Heart left ventricle (tissue), 16 donors: ENCODE measurements at regions of chr10 and their contacts with region 1.

Region 1: DNA sequence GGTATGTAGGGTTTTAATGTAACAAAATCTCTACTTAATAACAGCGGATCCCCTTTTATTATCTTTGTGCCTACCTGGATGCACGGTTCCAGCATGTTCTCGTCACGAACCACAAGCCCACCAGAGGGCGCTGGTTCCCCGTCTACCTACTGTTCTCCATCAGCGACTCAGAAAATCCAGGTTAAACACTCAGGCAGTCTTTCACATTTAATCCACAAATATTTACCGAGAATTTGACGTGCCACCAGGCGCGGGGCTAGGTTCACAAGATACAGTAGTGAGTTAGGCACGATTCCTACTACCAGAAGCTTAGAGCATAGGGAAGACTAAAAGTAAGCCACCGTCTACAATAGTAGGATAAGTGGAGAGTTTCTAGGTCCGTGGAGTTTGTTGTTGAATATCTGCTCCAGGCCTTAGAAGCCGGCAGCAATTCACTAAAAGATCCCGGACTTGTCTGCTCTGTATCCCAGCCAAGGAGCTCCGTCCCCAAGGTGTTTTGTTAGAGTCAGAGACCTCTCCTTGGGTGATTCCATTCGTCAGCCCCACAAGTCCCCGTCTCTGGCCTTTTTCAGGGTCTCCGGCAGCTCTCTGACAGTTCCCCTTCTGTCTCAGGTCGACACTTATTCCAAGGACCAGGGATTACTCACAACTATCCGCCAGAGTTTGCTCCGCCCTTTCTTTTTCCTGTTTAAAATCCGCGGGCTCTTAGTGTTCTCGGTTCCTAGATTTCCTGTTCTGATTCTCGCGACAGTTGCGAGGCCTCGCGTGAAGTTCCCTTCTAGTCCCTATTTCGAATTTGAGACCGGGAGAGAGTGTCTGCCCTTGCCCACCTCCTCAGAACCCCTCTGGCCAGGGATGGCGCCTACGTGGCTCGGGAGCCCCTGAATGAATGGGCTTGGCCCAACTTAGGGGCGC is 1.5 kb upstream of the KAZALD1 start:
- DNase-seq: peak; percentile 89 to 96 (median 93)
- ATAC-seq: peak; percentile 72 to 79 (median 76)
- H3K4me3 ChIP-seq: peak overlapping the region; percentile 59 to 88 (median 78)
- H3K27ac ChIP-seq: peak overlapping the region; percentile 92 to 100 (median 98)
- H3K4me1 ChIP-seq: peaks cover 0 to 50% (median 36%) of the 10 kb centered on the region in 12 donors
- H3K27me3 ChIP-seq: peaks cover 0 to 19% (median 0%) of the 10 kb centered on the region in 9 donors
- CTCF ChIP-seq: peak; percentile 81 to 96 (median 88)
- POLR2A ChIP-seq: no peak

Region 2: DNA sequence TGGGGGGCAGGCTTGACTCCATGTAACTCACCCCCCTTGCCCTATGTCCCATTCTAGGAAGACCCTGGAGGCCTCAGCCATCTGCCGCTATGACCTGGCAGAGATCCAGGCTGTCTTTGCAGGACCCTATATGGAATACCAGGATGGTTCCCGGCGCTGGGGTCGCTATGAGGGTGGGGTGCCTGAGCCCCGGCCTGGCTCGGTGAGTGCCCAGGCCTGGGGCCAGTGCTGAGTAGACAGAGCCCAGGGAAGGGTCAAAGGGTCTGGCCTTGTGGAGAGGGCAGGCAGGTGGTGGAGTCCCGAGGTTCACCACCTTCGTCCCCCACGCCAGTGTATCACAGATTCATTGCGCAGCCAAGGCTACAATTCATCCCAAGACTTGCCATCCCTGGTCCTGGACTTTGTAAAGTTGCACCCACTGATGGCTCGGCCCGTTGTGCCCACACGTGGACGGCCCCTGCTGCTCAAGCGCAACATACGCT is 80.5 kb before region 1 on chr10:
- intact Hi-C with region 1: no loop called
- DNase-seq: peak in 1 of 5 donors; percentile 13
- ATAC-seq: no peak
- H3K4me3 ChIP-seq: no peak overlapping the region
- H3K27ac ChIP-seq: no peak overlapping the region
- H3K4me1 ChIP-seq: no peaks in the 10 kb centered on the region
- H3K27me3 ChIP-seq: no peaks in the 10 kb centered on the region
- CTCF ChIP-seq: no peak
- POLR2A ChIP-seq: no peak

Region 3: DNA sequence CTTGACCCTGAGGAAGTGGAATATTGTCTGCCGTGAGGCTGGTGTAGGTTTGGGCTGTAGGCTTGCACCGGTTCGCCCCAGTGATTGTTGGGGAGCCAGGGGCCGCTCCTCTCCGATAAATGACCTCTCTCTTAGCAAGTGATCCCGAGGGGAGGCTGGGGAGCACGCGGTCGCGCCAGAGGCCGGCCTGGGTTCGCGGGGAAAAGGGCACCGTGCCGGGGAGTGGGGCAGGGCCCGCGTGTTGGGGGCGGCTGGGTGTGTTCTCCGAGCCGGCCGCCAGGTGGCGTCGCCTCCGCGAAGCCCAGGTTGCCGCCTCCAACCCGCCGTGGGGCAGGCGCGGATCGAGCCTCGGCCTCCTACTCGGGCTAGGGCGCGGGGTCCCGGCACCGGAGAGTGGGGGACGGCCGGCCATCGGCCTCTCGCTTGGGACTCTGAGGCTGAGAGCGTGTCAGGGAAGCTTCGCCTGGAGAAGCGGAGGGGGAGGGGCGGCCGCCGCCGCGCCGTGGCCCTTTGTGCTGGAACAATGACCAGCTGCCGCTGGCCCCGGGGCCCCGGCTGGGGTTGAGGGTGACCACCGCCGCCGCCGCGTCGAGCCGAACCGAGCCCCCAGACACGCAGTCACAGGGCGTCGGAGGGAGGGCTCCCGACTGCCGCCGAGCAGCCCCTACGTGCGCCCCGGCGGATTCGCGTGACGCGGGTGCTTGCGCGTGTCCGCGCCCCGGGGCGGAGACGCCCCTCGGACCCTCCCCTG is 61.1 kb before region 1 on chr10:
- intact Hi-C with region 1: loop called in 4 of 10 experiments (anchors 5 to 10 kb)
- DNase-seq: peak; percentile 87 to 93 (median 89)
- ATAC-seq: peak; percentile 17 to 75 (median 62)
- H3K4me3 ChIP-seq: peak overlapping the region; percentile 62 to 99 (median 89)
- H3K27ac ChIP-seq: peak overlapping the region; percentile 93 to 100 (median 100)
- H3K4me1 ChIP-seq: peaks cover 8 to 66% (median 49%) of the 10 kb centered on the region in 12 donors
- H3K27me3 ChIP-seq: no peaks in the 10 kb centered on the region
- CTCF ChIP-seq: peak; percentile 92 to 99 (median 97)
- POLR2A ChIP-seq: peak; percentile 60 to 96

Region 4: GRCh38 chr10:101042667-101043355 is 17.5 kb before region 1 on chr10:
- intact Hi-C with region 1: loop called in 4 of 10 experiments (anchors 1 to 2 kb)
- DNase-seq: peak; percentile 96 to 98 (median 96)
- ATAC-seq: peak; percentile 89 to 96 (median 94)
- H3K4me3 ChIP-seq: peak overlapping the region; percentile 9 to 79 (median 56)
- H3K27ac ChIP-seq: peak overlapping the region; percentile 26 to 91 (median 85)
- H3K4me1 ChIP-seq: peaks cover 0 to 24% (median 17%) of the 10 kb centered on the region in 12 donors
- H3K27me3 ChIP-seq: peaks cover 3 to 17% (median 12%) of the 10 kb centered on the region in 9 donors
- CTCF ChIP-seq: no peak
- POLR2A ChIP-seq: peak in 1 of 2 donors; percentile 61

Region 5: GRCh38 chr10:101141616-101142532 is 81.6 kb after region 1 on chr10:
- intact Hi-C with region 1: loop called in 3 of 10 experiments (anchors 5 to 10 kb)
- DNase-seq: peak; percentile 69 to 92 (median 77)
- ATAC-seq: peak; percentile 68 to 91 (median 87)
- H3K4me3 ChIP-seq: no peak overlapping the region
- H3K27ac ChIP-seq: no peak overlapping the region
- H3K4me1 ChIP-seq: peaks cover 0 to 33% (median 7%) of the 10 kb centered on the region in 12 donors
- H3K27me3 ChIP-seq: peaks cover 70 to 100% (median 94%) of the 10 kb centered on the region in 9 donors
- CTCF ChIP-seq: peak; percentile 89 to 98 (median 96)
- POLR2A ChIP-seq: no peak